ENCODE measurements at regions of chr16 and their contacts with region 1.

Region 1: GRCh38 chr16:67040906-67041305 is 12.0 kb downstream of the CBFB start:
- DNase-seq: no peak
- ATAC-seq: no peak
- H3K4me3 Mint-ChIP-seq: no peak overlapping the region
- H3K27ac Mint-ChIP-seq: no peak overlapping the region
- H3K4me1 Mint-ChIP-seq: peaks cover 20% of the 10 kb centered on the region
- H3K27me3 Mint-ChIP-seq: no peaks in the 10 kb centered on the region
- CTCF ChIP-seq: no peak

Region 2: GRCh38 chr16:66970775-66971725 is 69.9 kb before region 1 on chr16:
- CTCF ChIA-PET with region 1: no interaction called
- POLR2A ChIA-PET with region 1: no interaction called
- intact Hi-C with region 1: no loop called
- DNase-seq: no peak
- ATAC-seq: no peak
- H3K4me3 Mint-ChIP-seq: no peak overlapping the region
- H3K27ac Mint-ChIP-seq: no peak overlapping the region
- H3K4me1 Mint-ChIP-seq: no peaks in the 10 kb centered on the region
- H3K27me3 Mint-ChIP-seq: peaks cover 6% of the 10 kb centered on the region
- CTCF ChIP-seq: no peak

Region 3: DNA sequence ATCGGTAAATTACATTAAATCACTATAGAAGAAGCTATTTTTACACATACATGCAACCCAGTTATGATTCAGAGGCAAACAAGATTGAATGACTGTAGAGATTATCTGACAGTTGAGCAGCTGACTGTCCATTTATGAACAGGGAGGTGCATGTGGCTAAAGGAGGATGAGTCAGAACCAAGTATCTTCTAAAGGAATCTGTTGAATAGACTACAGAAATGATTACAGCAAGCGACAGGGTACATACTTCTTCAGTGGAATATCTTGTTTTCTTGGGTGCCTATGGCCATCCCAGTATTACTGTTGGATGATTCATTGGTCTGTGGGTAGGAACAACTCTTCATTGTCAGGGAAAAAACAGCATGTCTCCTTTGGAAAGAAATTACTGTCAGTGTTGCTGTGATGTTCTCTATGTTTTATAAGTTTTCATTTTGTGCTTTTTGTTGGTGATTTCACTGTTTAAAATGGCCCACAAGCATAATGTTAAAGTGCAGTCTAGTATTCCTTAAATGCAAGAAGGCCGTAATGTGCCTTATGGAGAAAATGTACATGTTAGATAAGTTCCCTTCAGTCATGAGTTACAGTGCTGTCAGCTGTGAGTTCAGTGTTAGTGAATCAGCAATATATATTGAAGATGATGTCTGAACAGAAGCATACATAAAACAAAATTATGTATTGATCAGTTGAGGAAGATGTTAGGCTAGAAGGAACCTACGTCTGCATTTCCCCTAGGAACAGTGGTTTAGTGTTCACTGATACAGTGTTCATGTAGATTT is 15.0 kb after region 1 on chr16:
- CTCF ChIA-PET with region 1: no interaction called
- POLR2A ChIA-PET with region 1: no interaction called
- intact Hi-C with region 1: loop called (anchors 1 kb)
- DNase-seq: no peak
- ATAC-seq: no peak
- H3K4me3 Mint-ChIP-seq: no peak overlapping the region
- H3K27ac Mint-ChIP-seq: no peak overlapping the region
- H3K4me1 Mint-ChIP-seq: peaks cover 29% of the 10 kb centered on the region
- H3K27me3 Mint-ChIP-seq: no peaks in the 10 kb centered on the region
- CTCF ChIP-seq: no peak

Region 4: GRCh38 chr16:67071476-67072048 is 30.7 kb after region 1 on chr16:
- CTCF ChIA-PET with region 1: no interaction called
- POLR2A ChIA-PET with region 1: no interaction called
- intact Hi-C with region 1: loop called (anchors 5 kb)
- DNase-seq: no peak
- ATAC-seq: no peak
- H3K4me3 Mint-ChIP-seq: no peak overlapping the region
- H3K27ac Mint-ChIP-seq: no peak overlapping the region
- H3K4me1 Mint-ChIP-seq: no peaks in the 10 kb centered on the region
- H3K27me3 Mint-ChIP-seq: no peaks in the 10 kb centered on the region
- CTCF ChIP-seq: no peak

Region 5: GRCh38 chr16:67115639-67116038 is 74.7 kb after region 1 on chr16:
- CTCF ChIA-PET with region 1: no interaction called
- POLR2A ChIA-PET with region 1: no interaction called
- intact Hi-C with region 1: no loop called
- DNase-seq: no peak
- ATAC-seq: no peak
- H3K4me3 Mint-ChIP-seq: no peak overlapping the region
- H3K27ac Mint-ChIP-seq: no peak overlapping the region
- H3K4me1 Mint-ChIP-seq: peaks cover 15% of the 10 kb centered on the region
- H3K27me3 Mint-ChIP-seq: no peaks in the 10 kb centered on the region
- CTCF ChIP-seq: no peak